Tibial artery (tissue), 4 donors: ENCODE measurements at regions of chr16 and their contacts with region 1.

Region 1: GRCh38 chr16:67993189-67994039 is 5.9 kb downstream of the DPEP2 start:
- DNase-seq: peak; percentile 67 to 84
- H3K4me3 ChIP-seq: peak overlapping the region; percentile 20 to 50
- H3K27ac ChIP-seq: peak overlapping the region; percentile 24 to 31
- H3K4me1 ChIP-seq: peaks cover 0 to 12% (median 9%) of the 10 kb centered on the region in 4 donors
- H3K27me3 ChIP-seq: no peaks in the 10 kb centered on the region
- CTCF ChIP-seq: peak; percentile 97 to 99

Region 2: GRCh38 chr16:68033101-68033500 is 39.7 kb after region 1 on chr16:
- intact Hi-C with region 1: no loop called
- DNase-seq: no peak
- H3K4me3 ChIP-seq: no peak overlapping the region
- H3K27ac ChIP-seq: no peak overlapping the region
- H3K4me1 ChIP-seq: no peaks in the 10 kb centered on the region
- H3K27me3 ChIP-seq: no peaks in the 10 kb centered on the region
- CTCF ChIP-seq: no peak

Region 3: DNA sequence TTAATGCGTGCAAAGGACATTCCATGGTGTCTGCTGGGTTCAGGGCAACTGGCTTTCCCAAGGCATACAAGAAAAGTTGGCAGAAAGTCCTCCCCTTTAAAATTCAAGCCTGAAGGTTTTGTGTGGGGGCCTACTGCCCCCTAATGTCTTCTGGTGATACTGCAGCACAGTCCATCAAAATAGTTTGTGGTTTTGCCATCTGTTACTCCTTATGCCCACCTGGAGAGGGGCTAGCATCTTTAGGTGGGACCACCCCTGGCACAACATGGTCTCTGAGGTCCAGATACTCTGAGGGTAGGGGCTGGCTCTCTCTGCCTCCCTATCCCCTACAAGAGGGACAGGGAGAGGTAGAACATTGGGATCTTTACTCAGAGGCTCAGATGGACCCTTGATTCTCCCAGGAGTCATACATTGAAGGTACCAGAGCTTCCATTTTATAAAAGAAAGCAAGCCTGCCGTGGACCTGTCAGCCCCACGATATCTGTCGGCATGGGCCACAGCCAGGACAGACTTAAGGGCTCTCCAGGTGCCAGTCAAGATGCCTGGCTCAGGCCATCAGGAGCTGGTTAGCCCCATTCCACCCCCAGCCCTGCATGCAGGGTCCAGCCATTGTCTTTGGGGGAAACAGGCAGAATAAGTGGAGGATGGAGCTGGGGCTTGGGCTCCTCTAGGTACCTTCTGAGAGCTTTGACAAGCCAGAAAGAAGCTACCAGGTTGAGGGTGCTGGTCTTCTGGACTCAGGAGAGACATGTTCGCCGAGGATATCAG is 236.2 kb after region 1 on chr16:
- intact Hi-C with region 1: loop called (anchors 5 kb)
- DNase-seq: peak in 1 of 2 donors; percentile 70
- H3K4me3 ChIP-seq: no peak overlapping the region
- H3K27ac ChIP-seq: no peak overlapping the region
- H3K4me1 ChIP-seq: peaks cover 0 to 16% (median 3%) of the 10 kb centered on the region in 4 donors
- H3K27me3 ChIP-seq: no peaks in the 10 kb centered on the region
- CTCF ChIP-seq: peak; percentile 88 to 89